IMR-90 (cell line): ENCODE measurements at regions of chr11 and their contacts with region 1.

Region 1: DNA sequence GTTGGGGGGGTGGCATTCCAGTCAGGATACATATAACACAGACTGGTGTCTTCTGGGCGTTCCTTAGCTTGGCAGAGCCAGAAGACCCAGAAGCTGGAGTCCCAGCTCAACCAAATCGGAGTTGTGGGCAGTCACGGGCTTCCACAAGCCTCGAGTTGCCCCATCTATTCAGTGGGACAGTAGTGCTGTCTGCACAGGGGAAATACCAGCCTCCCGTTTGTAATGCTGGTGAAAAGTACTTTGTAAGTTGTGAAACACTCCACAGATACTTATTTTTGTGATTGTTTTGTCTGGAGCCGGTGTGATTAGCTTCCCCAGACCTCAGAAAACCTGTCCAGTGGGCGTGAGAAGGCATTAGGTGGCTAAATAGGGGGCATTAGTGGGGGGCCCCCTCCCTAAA is 13.6 kb downstream of the DGKZ start:
- DNase-seq: no peak
- ATAC-seq: no peak
- H3K4me3 ChIP-seq: no peak overlapping the region
- H3K27ac ChIP-seq: peak overlapping the region; percentile 66
- H3K4me1 ChIP-seq: peaks cover 37% of the 10 kb centered on the region
- H3K27me3 ChIP-seq: no peaks in the 10 kb centered on the region
- CTCF ChIP-seq: no peak
- POLR2A ChIP-seq: no peak
- RAD21 ChIP-seq: no peak

Region 2: GRCh38 chr11:46278387-46279125 is 82.3 kb before region 1 on chr11:
- CTCF ChIA-PET with region 1: no interaction called
- POLR2A ChIA-PET with region 1: no interaction called
- dilution Hi-C with region 1: no loop called
- in situ Hi-C with region 1: no loop called
- intact Hi-C with region 1: no loop called
- DNase-seq: peak; percentile 59
- ATAC-seq: peak; percentile 65
- H3K4me3 ChIP-seq: peak overlapping the region; percentile 86
- H3K27ac ChIP-seq: peak overlapping the region; percentile 98
- H3K4me1 ChIP-seq: peaks cover 25% of the 10 kb centered on the region
- H3K27me3 ChIP-seq: no peaks in the 10 kb centered on the region
- CTCF ChIP-seq: peak; percentile 77
- POLR2A ChIP-seq: no peak; the same call in 1 of the 2 replicates
- RAD21 ChIP-seq: peak; percentile 67

Region 3: GRCh38 chr11:46435679-46436078 is 74.8 kb after region 1 on chr11:
- CTCF ChIA-PET with region 1: no interaction called
- POLR2A ChIA-PET with region 1: interaction called, 10 read pairs
- dilution Hi-C with region 1: no loop called
- in situ Hi-C with region 1: no loop called
- intact Hi-C with region 1: no loop called
- DNase-seq: no peak
- ATAC-seq: no peak
- H3K4me3 ChIP-seq: no peak overlapping the region
- H3K27ac ChIP-seq: no peak overlapping the region
- H3K4me1 ChIP-seq: no peaks in the 10 kb centered on the region
- H3K27me3 ChIP-seq: no peaks in the 10 kb centered on the region
- CTCF ChIP-seq: no peak
- POLR2A ChIP-seq: no peak
- RAD21 ChIP-seq: no peak